HCT116 (cell line): ENCODE measurements at regions of chr14 and their contacts with region 1.

Region 1: GRCh38 chr14:20855652-20856291 is 35.4 kb upstream of the RNASE3 start:
- DNase-seq: peak; percentile 73
- ATAC-seq: peak; percentile 96
- H3K4me3 ChIP-seq: no peak overlapping the region
- H3K27ac ChIP-seq: no peak overlapping the region
- H3K4me1 ChIP-seq: peaks cover 3 to 5% of the 10 kb centered on the region in 2 experiments; a peak in 2 of 4 replicates
- H3K27me3 ChIP-seq: peaks cover 16% of the 10 kb centered on the region; the same call in 1 of the 2 replicates
- CTCF ChIP-seq: peak; percentile 69 to 90 (median 79)
- POLR2A ChIP-seq: no peak
- RAD21 ChIP-seq: peak; percentile 86

Region 2: GRCh38 chr14:20387576-20387975 is 468.2 kb before region 1 on chr14:
- CTCF ChIA-PET with region 1: no interaction called
- POLR2A ChIA-PET with region 1: no interaction called
- RAD21 ChIA-PET with region 1: no interaction called
- intact Hi-C with region 1: no loop called
- DNase-seq: no peak
- ATAC-seq: no peak
- H3K4me3 ChIP-seq: no peak overlapping the region
- H3K27ac ChIP-seq: no peak overlapping the region
- H3K4me1 ChIP-seq: no peaks in the 10 kb centered on the region
- H3K27me3 ChIP-seq: no peaks in the 10 kb centered on the region
- CTCF ChIP-seq: no peak
- POLR2A ChIP-seq: no peak
- RAD21 ChIP-seq: no peak

Region 3: DNA sequence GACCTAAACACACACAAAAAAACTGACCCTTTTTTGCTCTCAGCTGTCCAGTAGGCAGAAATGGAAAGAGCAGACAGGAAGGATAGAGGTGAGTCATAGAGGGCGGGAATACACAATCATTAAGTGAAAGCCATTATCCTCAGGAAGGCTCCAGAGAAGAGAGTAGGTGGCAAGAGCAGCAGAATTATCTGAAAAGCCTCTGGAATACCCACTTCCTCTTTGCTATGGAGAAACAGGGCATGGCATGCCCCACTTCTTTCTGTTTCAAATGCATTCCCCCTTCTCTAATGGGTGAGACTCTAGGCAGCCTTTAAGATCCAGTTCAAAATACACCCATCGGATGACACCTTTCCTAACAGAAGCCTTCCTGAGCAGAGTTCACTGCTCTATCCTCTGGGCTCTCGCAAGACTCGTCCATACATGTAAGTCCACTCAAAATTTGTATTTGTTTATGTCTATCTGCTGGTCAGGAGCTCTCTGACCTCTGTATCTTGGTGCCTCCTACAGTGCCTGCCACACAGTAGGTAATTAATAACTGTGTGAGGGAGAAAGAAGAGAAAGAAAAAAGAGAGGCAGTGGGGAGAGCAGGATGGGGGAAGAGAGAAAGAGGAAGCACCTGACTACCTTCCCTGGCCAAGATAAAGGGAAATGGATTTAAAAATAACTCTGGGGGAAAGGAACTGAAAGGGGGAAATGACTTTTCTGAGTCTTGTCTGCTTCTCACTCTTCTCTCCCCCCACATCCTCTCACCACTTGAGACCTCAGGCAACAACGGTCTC is 428.4 kb before region 1 on chr14:
- CTCF ChIA-PET with region 1: no interaction called
- POLR2A ChIA-PET with region 1: no interaction called
- RAD21 ChIA-PET with region 1: no interaction called
- intact Hi-C with region 1: no loop called
- DNase-seq: peak; percentile 13
- ATAC-seq: peak; percentile 82
- H3K4me3 ChIP-seq: peak overlapping the region in 1 of 2 experiments; percentile 33; a peak in 3 of 4 replicates
- H3K27ac ChIP-seq: peak overlapping the region; percentile 42
- H3K4me1 ChIP-seq: peaks cover 10 to 14% of the 10 kb centered on the region in 2 experiments
- H3K27me3 ChIP-seq: no peaks in the 10 kb centered on the region
- CTCF ChIP-seq: no peak
- POLR2A ChIP-seq: no peak
- RAD21 ChIP-seq: no peak

Region 4: DNA sequence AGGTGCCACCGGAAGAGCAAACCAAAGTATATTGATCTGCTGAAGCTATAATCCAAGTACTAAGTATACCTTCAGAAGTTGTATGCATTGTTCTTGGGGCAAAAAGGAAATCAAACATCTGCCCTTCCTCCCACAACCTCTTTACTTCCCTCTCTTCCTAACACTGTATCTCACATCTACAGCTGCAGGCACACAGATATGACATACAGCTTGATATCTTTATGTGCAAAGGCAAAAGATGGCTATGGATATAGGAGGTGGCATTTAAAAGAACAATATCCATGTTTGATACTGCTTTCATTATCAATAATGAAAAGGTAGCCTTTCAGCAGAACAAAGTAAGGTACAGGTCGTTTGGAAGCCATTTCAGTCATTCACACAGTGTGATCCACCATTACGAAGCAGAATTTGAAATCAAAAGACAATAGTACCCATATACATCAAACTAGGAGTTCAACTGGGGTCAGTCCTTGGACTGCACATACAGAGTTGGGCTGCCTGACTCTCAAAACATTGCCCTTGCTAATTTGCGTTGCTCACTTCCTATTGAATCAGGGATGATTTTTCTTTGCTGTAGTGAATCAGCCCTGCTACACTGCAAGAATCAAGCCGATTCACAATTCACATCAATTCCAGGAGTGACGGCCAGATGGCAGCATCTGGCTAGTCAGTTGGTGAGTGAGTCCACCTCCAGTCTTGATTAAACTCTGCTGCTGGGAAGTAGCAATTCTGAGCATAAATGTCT is 158.3 kb before region 1 on chr14:
- CTCF ChIA-PET with region 1: interaction called, 18 read pairs
- POLR2A ChIA-PET with region 1: no interaction called
- RAD21 ChIA-PET with region 1: interaction called in 1 of 2 experiments, 6 read pairs
- intact Hi-C with region 1: loop called (anchors 1 kb)
- DNase-seq: peak; percentile 55
- ATAC-seq: peak; percentile 98
- H3K4me3 ChIP-seq: no peak overlapping the region
- H3K27ac ChIP-seq: no peak overlapping the region
- H3K4me1 ChIP-seq: peaks cover 0 to 3% of the 10 kb centered on the region in 2 experiments; a peak in 1 of 4 replicates
- H3K27me3 ChIP-seq: no peaks in the 10 kb centered on the region
- CTCF ChIP-seq: peak; percentile 78 to 85 (median 80)
- POLR2A ChIP-seq: no peak
- RAD21 ChIP-seq: peak; percentile 81

Region 5: GRCh38 chr14:20866963-20867362 is 11.2 kb after region 1 on chr14:
- CTCF ChIA-PET with region 1: interaction called, 30 read pairs
- POLR2A ChIA-PET with region 1: no interaction called
- RAD21 ChIA-PET with region 1: interaction called in 1 of 2 experiments, 3 read pairs
- intact Hi-C with region 1: no loop called
- DNase-seq: peak; percentile 16
- ATAC-seq: peak; percentile 72
- H3K4me3 ChIP-seq: no peak overlapping the region
- H3K27ac ChIP-seq: no peak overlapping the region
- H3K4me1 ChIP-seq: no peaks in the 10 kb centered on the region
- H3K27me3 ChIP-seq: no peaks in the 10 kb centered on the region
- CTCF ChIP-seq: peak; percentile 48 to 69 (median 67); a peak in 5 of 6 replicates
- POLR2A ChIP-seq: no peak
- RAD21 ChIP-seq: peak; percentile 44

Region 6: GRCh38 chr14:21039585-21040369 is 184.0 kb after region 1 on chr14:
- CTCF ChIA-PET with region 1: interaction called, 15 read pairs
- POLR2A ChIA-PET with region 1: no interaction called
- RAD21 ChIA-PET with region 1: no interaction called
- intact Hi-C with region 1: loop called (anchors 1 kb)
- DNase-seq: peak; percentile 41
- ATAC-seq: peak; percentile 92
- H3K4me3 ChIP-seq: no peak overlapping the region
- H3K27ac ChIP-seq: no peak overlapping the region
- H3K4me1 ChIP-seq: peaks cover 0 to 7% of the 10 kb centered on the region in 2 experiments; a peak in 1 of 4 replicates
- H3K27me3 ChIP-seq: no peaks in the 10 kb centered on the region
- CTCF ChIP-seq: peak; percentile 58 to 61 (median 60); a peak in 5 of 6 replicates
- POLR2A ChIP-seq: no peak
- RAD21 ChIP-seq: peak; percentile 77